ENCODE measurements at regions of chr13 and their contacts with region 1.

Region 1: DNA sequence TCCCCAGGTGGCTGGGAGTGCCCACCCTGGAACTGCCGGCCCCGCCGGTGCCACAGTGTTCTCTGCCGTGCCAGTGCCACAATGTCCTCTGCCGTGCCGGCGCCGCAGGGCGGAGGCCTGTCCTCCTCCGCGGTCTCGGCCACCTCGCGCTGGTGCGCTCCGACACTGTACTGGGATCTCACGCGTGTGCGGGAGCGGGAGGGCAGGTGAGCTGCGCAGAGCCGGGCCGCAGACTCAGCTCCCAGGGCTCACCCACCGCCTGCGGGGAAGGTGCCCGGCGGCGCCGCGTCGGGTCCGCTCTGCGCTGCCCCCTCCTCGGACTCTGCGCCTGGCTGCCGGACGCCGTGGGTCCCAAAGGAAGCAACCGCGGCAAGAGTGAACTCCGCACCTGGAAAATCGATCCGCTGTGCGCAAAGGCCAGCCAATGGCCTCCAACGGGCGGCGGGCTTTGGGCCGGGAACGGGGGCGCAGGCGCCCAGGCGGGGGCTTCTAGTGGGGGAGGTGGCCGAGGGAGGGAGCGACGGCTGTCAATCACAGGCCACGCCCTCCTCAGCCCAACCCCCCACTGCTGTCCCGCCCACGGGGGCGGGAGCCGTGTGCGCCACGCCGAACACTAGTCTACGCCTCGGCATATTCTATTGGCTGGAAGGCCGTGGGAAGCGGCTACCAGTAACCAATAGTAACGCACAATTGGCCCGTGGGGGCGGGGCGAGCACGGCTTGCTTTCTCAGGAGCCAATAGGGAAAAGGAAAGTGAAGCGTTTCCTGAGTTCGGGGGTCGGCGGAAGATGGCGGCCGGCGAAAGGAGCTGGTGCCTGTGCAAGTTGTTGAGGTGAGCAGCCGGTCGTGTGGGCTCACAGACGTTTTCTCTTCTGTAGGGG is at the start of gene ALG11:
- DNase-seq: peak; percentile 100
- H3K4me3 ChIP-seq: peak within 1 kb of the TSS; percentile 79
- H3K4me3 Mint-ChIP-seq: peak within 1 kb of the TSS; percentile 99
- H3K27ac Mint-ChIP-seq: peak within 1 kb of the TSS; percentile 98
- H3K4me1 ChIP-seq: peaks cover 15% of the 10 kb centered on the region
- H3K4me1 Mint-ChIP-seq: peaks cover 26% of the 10 kb centered on the region
- H3K27me3 ChIP-seq: no peaks in the 10 kb centered on the region
- H3K27me3 Mint-ChIP-seq: no peaks in the 10 kb centered on the region
- CTCF ChIP-seq: no peak
- total RNA-seq, gene ALG11: 45.9 and 47.7 TPM in 2 replicates

Region 2: DNA sequence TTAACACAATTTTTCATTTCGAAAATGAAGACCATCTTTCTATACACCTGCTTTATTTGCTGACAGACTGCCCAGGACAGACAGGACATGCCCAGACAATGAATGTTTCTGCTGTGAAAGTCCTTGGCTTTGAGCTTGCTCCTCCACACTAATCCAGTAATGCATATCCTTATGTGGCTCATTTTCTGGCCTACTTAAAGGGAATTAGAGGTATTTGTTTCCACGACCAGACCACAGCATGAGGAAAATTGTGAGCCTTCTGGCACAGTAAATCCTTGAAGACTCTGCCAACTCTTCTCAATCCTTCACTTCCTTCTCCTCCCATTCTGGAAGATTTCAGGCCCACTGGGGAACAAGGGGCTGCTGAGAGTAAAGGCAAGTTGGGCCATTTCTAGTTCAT is 124.4 kb before region 1 on chr13:
- CTCF ChIA-PET with region 1: no interaction called
- POLR2A ChIA-PET with region 1: no interaction called
- intact Hi-C with region 1: no loop called
- DNase-seq: no peak
- H3K4me3 ChIP-seq: no peak overlapping the region
- H3K4me3 Mint-ChIP-seq: no peak overlapping the region
- H3K27ac Mint-ChIP-seq: no peak overlapping the region
- H3K4me1 ChIP-seq: no peaks in the 10 kb centered on the region
- H3K4me1 Mint-ChIP-seq: no peaks in the 10 kb centered on the region
- H3K27me3 ChIP-seq: no peaks in the 10 kb centered on the region
- H3K27me3 Mint-ChIP-seq: no peaks in the 10 kb centered on the region
- CTCF ChIP-seq: no peak

Region 3: DNA sequence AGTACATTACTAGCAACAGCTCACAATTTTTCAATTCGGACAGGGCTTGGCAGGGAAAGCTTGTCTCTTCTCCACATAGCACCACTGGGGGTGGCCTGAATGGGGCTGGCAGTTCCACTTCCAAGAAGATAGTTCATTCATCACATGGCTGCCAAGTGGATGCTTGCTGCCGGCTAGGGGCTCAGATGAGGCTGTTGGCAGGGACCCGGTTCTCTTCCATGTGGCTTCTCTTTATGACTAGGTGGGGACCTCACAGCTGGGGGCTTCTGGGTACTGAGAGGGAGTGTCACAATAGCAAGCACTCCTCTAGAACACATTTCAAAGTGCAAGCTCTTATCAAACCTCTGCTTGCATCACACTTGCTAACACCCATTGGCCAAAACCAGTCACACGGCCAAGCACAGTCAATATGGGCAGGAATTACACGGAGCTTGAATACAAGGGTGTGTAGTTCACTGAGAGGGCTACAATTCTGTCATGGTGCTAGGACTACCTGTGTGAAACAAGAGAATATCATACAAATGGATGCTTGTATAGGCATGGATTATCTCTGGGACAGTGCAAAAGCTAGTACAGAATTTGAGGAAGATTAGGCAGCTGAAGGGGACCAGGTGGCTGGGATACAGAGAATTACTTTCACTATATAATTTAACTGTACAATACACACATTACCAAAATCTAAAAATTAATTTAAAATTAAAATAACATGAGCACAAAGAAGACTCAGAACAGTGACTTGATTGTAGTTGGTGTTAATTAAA is 32.9 kb before region 1 on chr13:
- CTCF ChIA-PET with region 1: interaction called, 5 read pairs
- POLR2A ChIA-PET with region 1: no interaction called
- intact Hi-C with region 1: loop called (anchors 1 kb)
- DNase-seq: peak; percentile 79 to 86
- H3K4me3 ChIP-seq: no peak overlapping the region
- H3K4me3 Mint-ChIP-seq: peak overlapping the region; percentile 84
- H3K27ac Mint-ChIP-seq: peak overlapping the region; percentile 68
- H3K4me1 ChIP-seq: peaks cover 44% of the 10 kb centered on the region
- H3K4me1 Mint-ChIP-seq: peaks cover 36% of the 10 kb centered on the region
- H3K27me3 ChIP-seq: no peaks in the 10 kb centered on the region
- H3K27me3 Mint-ChIP-seq: no peaks in the 10 kb centered on the region
- CTCF ChIP-seq: no peak

Region 4: GRCh38 chr13:52001120-52001731 is 10.6 kb before region 1 on chr13:
- CTCF ChIA-PET with region 1: interaction called, 10 read pairs
- POLR2A ChIA-PET with region 1: interaction called, 4 read pairs
- intact Hi-C with region 1: loop called (anchors 2 kb)
- DNase-seq: no peak
- H3K4me3 ChIP-seq: no peak overlapping the region
- H3K4me3 Mint-ChIP-seq: no peak overlapping the region
- H3K27ac Mint-ChIP-seq: no peak overlapping the region
- H3K4me1 ChIP-seq: peaks cover 66% of the 10 kb centered on the region
- H3K4me1 Mint-ChIP-seq: peaks cover 58% of the 10 kb centered on the region
- H3K27me3 ChIP-seq: no peaks in the 10 kb centered on the region
- H3K27me3 Mint-ChIP-seq: no peaks in the 10 kb centered on the region
- CTCF ChIP-seq: peak; percentile 61 to 82

Region 5: GRCh38 chr13:52025475-52026245 is 13.8 kb after region 1 on chr13:
- CTCF ChIA-PET with region 1: no interaction called
- POLR2A ChIA-PET with region 1: interaction called, 4 read pairs
- intact Hi-C with region 1: loop called (anchors 1 kb)
- DNase-seq: peak in 1 of 2 experiments; percentile 38
- H3K4me3 ChIP-seq: no peak overlapping the region
- H3K4me3 Mint-ChIP-seq: peak overlapping the region; percentile 6
- H3K27ac Mint-ChIP-seq: peak overlapping the region; percentile 35
- H3K4me1 ChIP-seq: peaks cover 17% of the 10 kb centered on the region
- H3K4me1 Mint-ChIP-seq: peaks cover 15% of the 10 kb centered on the region
- H3K27me3 ChIP-seq: no peaks in the 10 kb centered on the region
- H3K27me3 Mint-ChIP-seq: no peaks in the 10 kb centered on the region
- CTCF ChIP-seq: no peak

Region 6: DNA sequence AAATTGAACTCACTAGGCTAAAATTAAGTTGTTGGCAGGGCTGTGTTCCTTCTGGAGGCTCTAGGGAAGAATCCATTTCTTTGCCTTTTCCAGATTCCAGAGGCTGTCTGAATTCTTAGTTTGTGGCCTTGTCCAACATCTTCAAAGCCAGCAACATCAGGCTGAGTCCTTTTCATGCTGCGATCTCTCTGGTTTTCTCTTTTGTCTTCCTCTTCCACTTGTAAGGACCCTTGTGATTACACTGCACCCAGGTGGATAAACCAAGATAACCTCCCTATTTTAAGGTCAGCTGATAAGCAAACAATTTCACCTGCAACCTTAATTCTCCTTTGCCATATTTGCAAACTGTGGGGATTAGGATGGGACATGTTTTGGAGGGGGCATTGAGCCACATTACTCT is 24.2 kb after region 1 on chr13:
- CTCF ChIA-PET with region 1: interaction called, 3 read pairs
- POLR2A ChIA-PET with region 1: interaction called, 4 read pairs
- intact Hi-C with region 1: loop called (anchors 1 kb)
- DNase-seq: peak; percentile 56 to 62
- H3K4me3 ChIP-seq: no peak overlapping the region
- H3K4me3 Mint-ChIP-seq: no peak overlapping the region
- H3K27ac Mint-ChIP-seq: peak overlapping the region; percentile 7
- H3K4me1 ChIP-seq: peaks cover 17% of the 10 kb centered on the region
- H3K4me1 Mint-ChIP-seq: peaks cover 17% of the 10 kb centered on the region
- H3K27me3 ChIP-seq: no peaks in the 10 kb centered on the region
- H3K27me3 Mint-ChIP-seq: no peaks in the 10 kb centered on the region
- CTCF ChIP-seq: no peak

Region 7: DNA sequence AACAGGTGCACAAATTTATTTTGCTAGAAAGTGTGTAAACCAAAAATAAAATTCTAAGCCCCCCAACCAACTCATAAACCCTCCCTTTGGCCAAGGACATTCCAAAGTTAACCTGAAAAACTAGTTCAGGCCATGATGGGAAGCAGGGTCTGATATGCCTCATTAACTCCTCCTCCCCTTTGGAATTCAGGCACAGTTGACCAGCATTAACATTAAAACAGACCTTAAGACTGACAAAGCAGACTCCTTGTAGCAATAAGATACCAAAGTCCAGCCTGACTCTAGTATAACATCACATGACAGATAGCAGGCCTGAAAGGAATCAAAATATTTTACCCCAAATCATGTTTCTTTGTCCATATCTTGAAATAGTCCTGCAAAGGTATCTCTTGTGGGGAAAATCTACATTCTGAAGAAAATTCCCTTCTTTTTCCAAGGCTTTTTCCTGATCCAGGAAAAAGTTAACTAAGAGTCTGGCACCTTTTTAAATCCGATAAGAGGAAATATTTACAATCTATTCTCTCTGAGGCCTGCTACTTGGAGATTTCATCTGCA is 97.3 kb after region 1 on chr13:
- CTCF ChIA-PET with region 1: no interaction called
- POLR2A ChIA-PET with region 1: no interaction called
- intact Hi-C with region 1: loop called (anchors 2 kb)
- DNase-seq: peak in 1 of 2 experiments; percentile 30
- H3K4me3 ChIP-seq: no peak overlapping the region
- H3K4me3 Mint-ChIP-seq: no peak overlapping the region
- H3K27ac Mint-ChIP-seq: no peak overlapping the region
- H3K4me1 ChIP-seq: peaks cover 19% of the 10 kb centered on the region
- H3K4me1 Mint-ChIP-seq: peaks cover 14% of the 10 kb centered on the region
- H3K27me3 ChIP-seq: no peaks in the 10 kb centered on the region
- H3K27me3 Mint-ChIP-seq: no peaks in the 10 kb centered on the region
- CTCF ChIP-seq: no peak